T-cell (primary cell): ENCODE measurements at regions of chr10 and their contacts with region 1.

Region 1: DNA sequence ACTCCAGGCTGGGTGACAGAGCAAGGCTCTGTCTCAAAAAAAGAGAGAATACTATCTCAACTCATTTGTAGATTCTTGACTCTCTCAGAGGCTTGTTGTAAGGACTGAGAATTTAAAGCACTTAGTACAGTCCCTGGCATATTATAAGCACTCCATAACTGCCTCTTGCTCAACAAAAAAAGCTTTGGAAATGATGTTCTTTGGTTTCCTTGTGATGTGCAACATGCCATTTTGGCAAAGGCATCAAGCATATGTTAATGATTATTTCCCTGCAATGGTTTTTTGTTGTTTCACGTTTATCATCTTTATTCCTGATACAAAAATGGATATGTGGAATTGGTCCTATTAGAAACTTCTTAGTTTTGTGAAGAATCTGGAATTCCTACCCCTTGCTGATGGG is 15.7 kb downstream of the NOLC1 start:
- DNase-seq: no peak
- ATAC-seq: no peak
- H3K4me3 ChIP-seq: no peak overlapping the region
- H3K4me3 Mint-ChIP-seq: no peak overlapping the region
- H3K27ac ChIP-seq: no peak overlapping the region
- H3K27ac Mint-ChIP-seq: no peak overlapping the region
- H3K4me1 ChIP-seq: peaks cover 4 to 10% of the 10 kb centered on the region in 2 experiments
- H3K4me1 Mint-ChIP-seq: peaks cover 0 to 11% (median 8%) of the 10 kb centered on the region in 3 donors
- H3K27me3 ChIP-seq: peaks cover 0 to 6% of the 10 kb centered on the region in 2 experiments
- H3K27me3 Mint-ChIP-seq: no peaks in the 10 kb centered on the region

Region 2: DNA sequence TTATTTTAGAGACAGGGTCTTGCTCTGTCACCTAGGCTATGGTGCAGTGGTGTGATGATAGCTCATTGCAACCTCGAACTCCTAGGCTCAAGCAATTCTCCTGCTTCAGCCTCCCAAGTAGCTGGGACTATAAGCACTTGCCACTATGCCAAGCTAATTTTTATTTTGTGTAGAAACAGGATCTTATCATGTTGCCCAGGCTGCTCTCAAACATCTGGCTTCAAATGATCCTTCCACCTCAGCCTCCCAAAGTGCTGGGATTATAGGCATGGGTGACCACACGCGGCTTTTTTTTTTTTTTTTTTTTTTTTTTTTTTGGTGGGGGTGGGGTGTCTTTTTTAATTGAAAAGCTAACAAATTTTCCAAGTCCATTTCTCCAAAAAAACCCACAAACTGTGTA is 84.3 kb before region 1 on chr10:
- CTCF ChIA-PET with region 1: interaction called in 1 of 2 experiments, 10 read pairs
- POLR2A ChIA-PET with region 1: no interaction called
- DNase-seq: no peak
- ATAC-seq: no peak
- H3K4me3 ChIP-seq: no peak overlapping the region
- H3K4me3 Mint-ChIP-seq: no peak overlapping the region
- H3K27ac ChIP-seq: no peak overlapping the region
- H3K27ac Mint-ChIP-seq: no peak overlapping the region
- H3K4me1 ChIP-seq: no peaks in the 10 kb centered on the region
- H3K4me1 Mint-ChIP-seq: no peaks in the 10 kb centered on the region
- H3K27me3 ChIP-seq: no peaks in the 10 kb centered on the region
- H3K27me3 Mint-ChIP-seq: no peaks in the 10 kb centered on the region

Region 3: DNA sequence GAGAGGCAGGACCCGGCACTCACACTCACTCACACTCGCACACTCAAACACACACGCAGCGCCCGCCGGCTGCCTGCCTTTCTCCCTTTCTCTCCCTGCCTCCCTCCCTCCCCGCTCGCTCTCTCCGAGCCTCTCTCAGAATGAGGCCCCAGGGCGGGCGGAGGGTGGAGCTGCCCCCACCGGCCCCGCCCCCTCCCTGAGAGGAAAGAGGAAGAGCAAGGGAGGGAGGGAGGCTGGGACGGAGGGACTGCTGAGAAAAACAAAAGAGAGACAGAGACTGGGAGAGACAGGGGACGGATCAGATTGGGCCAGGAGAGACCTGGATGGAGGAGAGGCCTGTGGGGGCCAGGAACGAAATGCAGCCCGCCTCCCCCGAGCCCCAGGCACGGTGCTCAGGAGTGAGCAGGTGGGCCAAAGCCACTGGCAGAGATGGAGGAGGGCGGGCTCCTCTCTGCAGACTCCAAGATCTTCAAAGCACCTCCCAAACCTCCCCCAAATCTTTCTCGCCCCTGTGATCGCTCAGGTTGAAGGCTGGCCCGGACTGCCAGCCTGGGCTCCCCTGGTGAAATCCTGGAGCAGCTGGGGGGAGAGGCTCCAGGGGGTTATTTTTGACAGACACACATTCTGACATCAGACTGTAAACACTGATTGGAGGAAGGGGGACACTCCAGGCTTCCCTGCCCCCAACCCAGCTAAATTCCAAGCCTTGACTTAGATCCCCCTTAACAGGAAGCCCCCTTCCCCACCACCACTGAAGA is 52.8 kb before region 1 on chr10:
- CTCF ChIA-PET with region 1: interaction called in 1 of 2 experiments, 13 read pairs
- POLR2A ChIA-PET with region 1: no interaction called
- DNase-seq: peak; percentile 70 to 87 (median 78)
- ATAC-seq: peak; percentile 74 to 77 (median 75)
- H3K4me3 ChIP-seq: peak overlapping the region; percentile 59 to 74
- H3K4me3 Mint-ChIP-seq: peak overlapping the region; percentile 84 to 87 (median 86)
- H3K27ac ChIP-seq: peak overlapping the region; percentile 64
- H3K27ac Mint-ChIP-seq: peak overlapping the region; percentile 77 to 95
- H3K4me1 ChIP-seq: peaks cover 40 to 75% of the 10 kb centered on the region in 2 experiments
- H3K4me1 Mint-ChIP-seq: peaks cover 65 to 69% (median 67%) of the 10 kb centered on the region in 3 donors
- H3K27me3 ChIP-seq: no peaks in the 10 kb centered on the region
- H3K27me3 Mint-ChIP-seq: no peaks in the 10 kb centered on the region

Region 4: GRCh38 chr10:102185811-102186527 is 18.1 kb after region 1 on chr10:
- CTCF ChIA-PET with region 1: no interaction called
- POLR2A ChIA-PET with region 1: no interaction called
- DNase-seq: no peak
- ATAC-seq: no peak
- H3K4me3 ChIP-seq: no peak overlapping the region
- H3K4me3 Mint-ChIP-seq: no peak overlapping the region
- H3K27ac ChIP-seq: no peak overlapping the region
- H3K27ac Mint-ChIP-seq: no peak overlapping the region
- H3K4me1 ChIP-seq: peaks cover 0 to 15% of the 10 kb centered on the region in 2 experiments
- H3K4me1 Mint-ChIP-seq: peaks cover 16 to 17% (median 16%) of the 10 kb centered on the region in 3 donors
- H3K27me3 ChIP-seq: no peaks in the 10 kb centered on the region
- H3K27me3 Mint-ChIP-seq: no peaks in the 10 kb centered on the region

Region 5: DNA sequence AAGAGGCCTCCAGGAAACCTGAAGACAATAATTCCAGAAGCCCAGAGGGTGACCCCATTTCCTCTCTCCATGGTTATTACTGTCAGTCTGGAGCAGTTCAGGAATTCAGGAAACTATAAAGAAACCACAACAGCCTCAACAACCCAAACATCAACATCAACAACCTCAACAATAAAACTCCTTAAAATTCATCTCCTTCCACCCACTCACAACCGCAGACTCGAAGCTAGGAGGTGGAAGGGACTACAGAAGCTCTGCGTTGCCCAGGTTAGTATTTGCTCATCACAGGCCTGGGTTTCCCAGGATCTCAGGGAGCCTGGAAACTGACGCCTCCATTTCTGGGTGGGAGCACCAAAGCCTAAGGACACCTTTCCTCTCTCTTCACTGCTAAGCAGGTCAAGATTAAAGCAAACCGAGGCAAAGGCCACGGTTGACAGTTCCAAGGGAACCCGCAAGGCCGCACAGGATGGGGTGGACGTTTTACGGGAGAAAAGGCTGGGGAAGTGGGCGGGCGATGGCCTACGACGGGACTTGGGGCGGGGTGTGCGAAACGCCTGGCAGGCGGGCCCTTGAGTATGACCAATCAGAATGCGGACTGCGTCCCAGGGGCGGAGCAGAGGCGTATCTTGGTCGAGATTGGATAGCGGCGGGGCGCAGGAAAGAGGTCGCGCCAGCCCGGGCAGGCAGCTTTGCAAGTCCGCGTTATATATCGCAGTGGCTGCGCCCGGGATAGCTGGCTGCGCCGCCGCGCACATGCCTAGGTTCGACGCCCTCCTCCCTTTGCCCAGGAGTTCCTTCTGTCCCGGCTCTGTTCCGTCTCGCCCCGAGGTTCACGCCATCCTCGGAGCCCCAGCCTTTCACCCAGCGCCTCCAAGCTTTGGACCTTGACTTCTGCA is 58.0 kb after region 1 on chr10 and contains the start of gene ELOVL3:
- CTCF ChIA-PET with region 1: interaction called in 1 of 2 experiments, 11 read pairs
- POLR2A ChIA-PET with region 1: no interaction called
- DNase-seq: peak; percentile 62 to 91 (median 80)
- ATAC-seq: peak; percentile 88 to 94 (median 92)
- H3K4me3 ChIP-seq: peak within 1 kb of the TSS; percentile 17 to 39
- H3K4me3 Mint-ChIP-seq: peak within 1 kb of the TSS; percentile 71 to 75 (median 71)
- H3K27ac ChIP-seq: no peak within 1 kb of the TSS
- H3K27ac Mint-ChIP-seq: peak within 1 kb of the TSS in 1 of 2 donors; percentile 17
- H3K4me1 ChIP-seq: peaks cover 2 to 27% of the 10 kb centered on the region in 2 experiments
- H3K4me1 Mint-ChIP-seq: peaks cover 18 to 25% (median 24%) of the 10 kb centered on the region in 3 donors
- H3K27me3 ChIP-seq: peaks cover 2 to 61% of the 10 kb centered on the region in 2 experiments
- H3K27me3 Mint-ChIP-seq: peaks cover 28 to 49% of the 10 kb centered on the region in 2 donors
- total RNA-seq, gene ELOVL3: not detected

Region 6: DNA sequence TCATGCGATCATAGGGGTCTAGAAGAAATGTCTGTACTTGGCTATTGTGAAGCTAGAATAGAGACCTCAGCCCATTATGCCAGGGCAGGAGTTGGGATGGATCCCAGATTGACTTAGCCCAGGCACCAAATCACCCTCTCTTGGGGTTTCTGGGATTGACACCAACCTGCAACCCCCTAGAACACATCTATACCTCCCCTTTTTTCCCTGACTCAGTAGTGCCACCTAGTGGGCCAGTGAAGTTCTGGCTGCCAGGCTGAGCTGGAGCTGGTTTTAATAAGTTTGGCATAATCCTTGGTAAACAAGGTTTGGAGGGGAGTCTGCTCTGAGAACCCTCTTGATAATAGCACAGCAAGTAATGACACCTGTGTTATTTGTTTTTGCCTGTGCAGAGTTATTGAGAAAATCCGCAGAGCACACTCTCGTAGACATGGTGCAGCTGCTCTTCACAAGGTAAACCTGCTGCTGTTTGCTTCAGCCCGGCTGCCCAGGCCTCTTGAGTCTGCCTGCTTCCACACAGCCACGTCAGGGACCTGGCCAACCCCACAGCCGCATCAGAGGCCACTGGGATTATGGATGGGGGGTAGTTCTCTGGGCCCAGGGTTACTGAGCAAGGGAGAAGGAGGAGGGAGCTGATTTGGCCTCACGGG is 184.3 kb after region 1 on chr10:
- CTCF ChIA-PET with region 1: interaction called, 3 to 25 read pairs
- POLR2A ChIA-PET with region 1: no interaction called
- DNase-seq: peak; percentile 20 to 84 (median 62)
- ATAC-seq: peak; percentile 67 to 70 (median 68)
- H3K4me3 ChIP-seq: no peak overlapping the region
- H3K4me3 Mint-ChIP-seq: no peak overlapping the region
- H3K27ac ChIP-seq: no peak overlapping the region
- H3K27ac Mint-ChIP-seq: no peak overlapping the region
- H3K4me1 ChIP-seq: no peaks in the 10 kb centered on the region
- H3K4me1 Mint-ChIP-seq: no peaks in the 10 kb centered on the region
- H3K27me3 ChIP-seq: no peaks in the 10 kb centered on the region
- H3K27me3 Mint-ChIP-seq: no peaks in the 10 kb centered on the region

Region 7: GRCh38 chr10:102583435-102584417 is 415.9 kb after region 1 on chr10:
- CTCF ChIA-PET with region 1: interaction called, 4 to 10 read pairs
- POLR2A ChIA-PET with region 1: no interaction called
- DNase-seq: peak; percentile 59 to 90 (median 75)
- ATAC-seq: peak; percentile 91 to 98 (median 96)
- H3K4me3 ChIP-seq: no peak overlapping the region
- H3K4me3 Mint-ChIP-seq: no peak overlapping the region
- H3K27ac ChIP-seq: no peak overlapping the region
- H3K27ac Mint-ChIP-seq: no peak overlapping the region
- H3K4me1 ChIP-seq: peaks cover 0 to 5% of the 10 kb centered on the region in 2 experiments
- H3K4me1 Mint-ChIP-seq: peaks cover 11 to 16% (median 12%) of the 10 kb centered on the region in 3 donors
- H3K27me3 ChIP-seq: no peaks in the 10 kb centered on the region
- H3K27me3 Mint-ChIP-seq: no peaks in the 10 kb centered on the region